HepG2 (cell line): ENCODE measurements at regions of chr6 and their contacts with region 1.

Region 1: DNA sequence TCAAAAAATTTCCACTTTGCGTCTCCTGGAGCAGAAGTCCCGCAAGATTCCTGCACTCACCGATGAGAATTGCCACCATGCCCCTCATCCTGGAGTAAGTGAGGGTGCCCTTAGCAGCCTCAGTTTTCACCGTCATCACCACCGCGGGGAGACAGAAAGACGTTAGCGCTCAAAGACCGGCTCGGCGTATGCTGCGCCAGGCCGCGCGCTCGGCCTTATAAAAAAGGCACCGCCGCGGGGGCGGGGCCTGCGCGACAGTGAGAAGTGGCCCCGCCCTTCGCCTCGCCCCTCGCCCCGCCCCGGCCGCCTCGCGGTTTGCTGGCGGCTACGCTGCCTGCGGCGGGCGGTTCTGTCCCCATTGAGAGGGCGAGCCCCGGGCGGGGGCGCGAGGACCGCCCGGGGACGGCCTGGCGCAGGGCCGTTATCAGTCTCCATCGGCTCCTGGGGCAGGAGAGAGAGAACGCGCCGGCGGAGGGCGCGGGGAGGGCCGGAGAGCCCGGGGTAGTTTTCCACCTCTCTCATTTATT is 122.3 kb upstream of the SLC2A12 start:
- DNase-seq: peak; percentile 87
- ATAC-seq: peak; percentile 93
- H3K4me3 ChIP-seq: peak overlapping the region; percentile 77 to 82 (median 78)
- H3K27ac ChIP-seq: peak overlapping the region; percentile 86
- H3K4me1 ChIP-seq: peaks cover 69% of the 10 kb centered on the region
- H3K27me3 ChIP-seq: no peaks in the 10 kb centered on the region; a peak in 1 of 5 replicates
- CTCF ChIP-seq: peak; percentile 48; the same call in 1 of the 2 replicates
- EP300 ChIP-seq: no peak; a peak in 1 of 4 replicates
- POLR2A ChIP-seq: peak; percentile 99
- RAD21 ChIP-seq: peak; percentile 76

Region 2: DNA sequence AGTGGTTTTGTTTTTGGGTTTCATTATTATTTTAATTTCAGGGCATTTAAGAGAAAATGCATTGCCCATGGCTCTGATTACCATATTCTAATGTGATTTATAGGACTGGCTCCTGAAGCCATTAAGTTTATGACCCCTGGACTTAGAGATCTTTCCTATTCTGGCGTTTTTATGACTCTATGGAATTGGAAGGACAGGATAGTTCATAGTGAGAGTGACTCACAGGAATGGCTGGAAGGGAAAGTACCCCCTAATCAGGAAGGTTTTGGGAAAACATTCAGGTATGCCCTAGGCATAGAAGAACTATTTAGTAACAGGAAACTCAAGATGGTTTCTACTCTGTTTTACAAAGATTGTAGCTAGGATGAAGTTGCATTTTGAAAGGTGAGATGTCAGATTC is 13.7 kb before region 1 on chr6:
- CTCF ChIA-PET with region 1: interaction called, 5 read pairs
- POLR2A ChIA-PET with region 1: no interaction called
- in situ Hi-C with region 1: no loop called
- intact Hi-C with region 1: loop called (anchors 1 kb)
- DNase-seq: no peak
- ATAC-seq: no peak
- H3K4me3 ChIP-seq: no peak overlapping the region
- H3K27ac ChIP-seq: no peak overlapping the region
- H3K4me1 ChIP-seq: no peaks in the 10 kb centered on the region
- H3K27me3 ChIP-seq: no peaks in the 10 kb centered on the region
- CTCF ChIP-seq: no peak
- EP300 ChIP-seq: no peak
- POLR2A ChIP-seq: no peak
- RAD21 ChIP-seq: no peak

Region 3: DNA sequence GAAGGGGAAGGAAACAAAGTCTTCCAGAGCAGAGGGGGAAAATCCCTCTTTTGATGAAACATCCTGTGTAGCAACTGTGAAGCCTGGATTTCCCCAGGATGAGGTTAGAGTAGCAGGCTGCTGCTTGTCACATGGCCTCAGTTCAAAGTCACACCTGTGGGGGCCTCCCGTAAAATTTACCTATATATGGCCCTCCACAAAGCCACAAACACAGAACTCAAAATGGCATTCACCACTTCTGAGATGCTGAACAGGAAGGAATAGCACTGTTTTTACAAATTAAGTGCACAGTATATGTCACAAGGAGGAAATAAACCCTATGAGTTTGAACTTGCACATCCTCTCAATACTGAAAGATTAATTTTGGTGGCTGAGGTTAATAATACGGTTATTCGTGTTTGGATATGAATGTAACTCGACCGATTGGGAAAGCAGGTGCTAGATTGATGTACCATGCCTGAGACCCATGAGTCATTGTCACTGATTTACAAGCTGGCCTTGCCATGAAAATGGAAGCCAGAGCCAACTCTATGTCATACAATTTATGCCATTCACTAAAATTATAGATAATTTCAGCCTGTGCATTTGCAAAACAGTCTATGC is 72.6 kb after region 1 on chr6:
- CTCF ChIA-PET with region 1: no interaction called
- POLR2A ChIA-PET with region 1: interaction called, 4 read pairs
- in situ Hi-C with region 1: no loop called
- intact Hi-C with region 1: loop called (anchors 2 kb)
- DNase-seq: no peak
- ATAC-seq: no peak
- H3K4me3 ChIP-seq: no peak overlapping the region
- H3K27ac ChIP-seq: no peak overlapping the region
- H3K4me1 ChIP-seq: peaks cover 59% of the 10 kb centered on the region
- H3K27me3 ChIP-seq: no peaks in the 10 kb centered on the region
- CTCF ChIP-seq: no peak
- EP300 ChIP-seq: 0 out of 4 replicates have a peak, but pooled peaks of 1 of the 2 experiments have one; percentile 32
- POLR2A ChIP-seq: no peak
- RAD21 ChIP-seq: no peak

Region 4: GRCh38 chr6:134436281-134436815 is 261.6 kb after region 1 on chr6:
- CTCF ChIA-PET with region 1: no interaction called
- POLR2A ChIA-PET with region 1: no interaction called
- in situ Hi-C with region 1: loop called (anchors 25 kb)
- intact Hi-C with region 1: no loop called
- DNase-seq: peak; percentile 41
- ATAC-seq: peak; percentile 75
- H3K4me3 ChIP-seq: no peak overlapping the region
- H3K27ac ChIP-seq: no peak overlapping the region
- H3K4me1 ChIP-seq: no peaks in the 10 kb centered on the region
- H3K27me3 ChIP-seq: no peaks in the 10 kb centered on the region; a peak in 1 of 5 replicates
- CTCF ChIP-seq: no peak
- EP300 ChIP-seq: no peak
- POLR2A ChIP-seq: no peak
- RAD21 ChIP-seq: no peak

Region 5: GRCh38 chr6:134529921-134530320 is 355.2 kb after region 1 on chr6:
- CTCF ChIA-PET with region 1: no interaction called
- POLR2A ChIA-PET with region 1: no interaction called
- in situ Hi-C with region 1: no loop called
- intact Hi-C with region 1: loop called (anchors 1 kb)
- DNase-seq: peak; percentile 93
- ATAC-seq: peak; percentile 97
- H3K4me3 ChIP-seq: no peak overlapping the region
- H3K27ac ChIP-seq: no peak overlapping the region
- H3K4me1 ChIP-seq: peaks cover 21% of the 10 kb centered on the region
- H3K27me3 ChIP-seq: no peaks in the 10 kb centered on the region
- CTCF ChIP-seq: no peak
- EP300 ChIP-seq: peak; percentile 81 to 95
- POLR2A ChIP-seq: no peak
- RAD21 ChIP-seq: no peak

Region 6: DNA sequence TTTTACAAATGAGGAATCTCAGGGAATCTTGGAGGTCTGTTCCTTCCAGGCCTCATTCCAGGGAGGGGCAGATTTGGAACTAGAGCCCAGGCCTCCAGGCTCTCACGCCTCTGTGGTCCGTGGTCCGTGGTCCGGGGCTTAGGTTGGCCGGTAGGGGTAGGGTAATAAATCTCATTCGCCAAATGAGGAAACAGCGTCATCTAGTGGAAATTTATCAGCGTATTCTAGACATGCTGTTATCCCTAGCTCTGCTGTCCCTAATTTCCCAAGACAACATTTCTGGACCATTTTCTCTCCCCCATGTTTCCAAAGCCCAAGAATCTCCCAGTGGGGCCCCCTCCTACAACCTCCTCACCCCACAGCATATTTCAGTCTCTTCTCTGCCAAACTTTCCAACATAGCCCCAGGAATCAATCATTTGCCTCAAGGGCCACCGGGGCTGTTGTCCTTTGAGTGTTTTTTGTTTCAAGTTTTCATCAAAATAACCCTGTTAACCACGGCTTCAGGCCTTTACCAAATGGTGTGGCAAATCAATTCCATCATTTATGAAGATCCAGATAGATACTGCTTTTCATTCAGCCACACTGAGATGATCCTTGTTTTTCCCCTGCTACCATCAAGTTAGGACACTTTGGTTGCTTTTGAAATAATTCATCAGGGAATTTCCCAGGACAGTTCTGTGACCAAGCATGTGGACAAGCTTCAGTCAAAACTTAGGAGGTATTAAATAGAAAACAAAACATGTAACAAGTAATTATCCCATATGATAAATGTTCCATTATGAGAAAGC is 648.4 kb after region 1 on chr6:
- CTCF ChIA-PET with region 1: interaction called, 20 read pairs
- POLR2A ChIA-PET with region 1: interaction called, 3 read pairs
- in situ Hi-C with region 1: no loop called
- intact Hi-C with region 1: no loop called
- DNase-seq: peak; percentile 82
- ATAC-seq: peak; percentile 100
- H3K4me3 ChIP-seq: no peak overlapping the region
- H3K27ac ChIP-seq: no peak overlapping the region
- H3K4me1 ChIP-seq: no peaks in the 10 kb centered on the region
- H3K27me3 ChIP-seq: peaks cover 2 to 10% of the 10 kb centered on the region in 2 experiments; a peak in 2 of 5 replicates
- CTCF ChIP-seq: peak; percentile 86
- EP300 ChIP-seq: no peak
- POLR2A ChIP-seq: no peak
- RAD21 ChIP-seq: peak; percentile 97